WTC11 (cell line): ENCODE measurements at regions of chr3 and their contacts with region 1.

Region 1: DNA sequence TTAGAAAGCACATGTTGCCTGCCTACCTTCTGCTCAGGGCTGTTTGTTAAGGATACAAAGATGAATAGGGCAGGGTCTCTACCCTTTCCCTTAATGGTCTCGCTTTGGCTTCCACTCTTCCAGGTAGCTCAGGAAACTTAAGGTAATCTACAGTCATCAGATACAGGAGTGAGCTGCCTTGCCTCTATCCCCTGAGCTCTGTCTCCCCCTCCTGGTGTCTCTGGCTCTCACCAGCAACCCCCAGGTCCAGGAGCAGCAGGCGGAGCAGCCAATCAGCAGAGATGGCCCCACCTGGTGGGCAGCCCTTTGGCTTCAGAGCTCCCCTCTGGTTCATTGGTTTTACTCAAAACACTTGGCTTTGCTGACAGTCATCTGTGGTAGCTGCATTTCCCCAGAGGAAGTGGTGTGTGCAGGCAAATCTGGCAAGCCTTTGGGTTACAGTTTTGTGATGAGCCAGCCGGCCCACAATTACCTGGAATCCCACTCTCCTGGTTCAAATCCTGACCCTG is 8.5 kb upstream of the CX3CR1 start:
- DNase-seq: peak; percentile 94
- ATAC-seq: peak; percentile 98
- H3K4me3 Mint-ChIP-seq: no peak overlapping the region
- H3K27ac Mint-ChIP-seq: no peak overlapping the region
- H3K4me1 Mint-ChIP-seq: peaks cover 5% of the 10 kb centered on the region
- H3K27me3 Mint-ChIP-seq: no peaks in the 10 kb centered on the region
- CTCF ChIP-seq: peak; percentile 47; the same call in 1 of the 2 replicates

Region 2: DNA sequence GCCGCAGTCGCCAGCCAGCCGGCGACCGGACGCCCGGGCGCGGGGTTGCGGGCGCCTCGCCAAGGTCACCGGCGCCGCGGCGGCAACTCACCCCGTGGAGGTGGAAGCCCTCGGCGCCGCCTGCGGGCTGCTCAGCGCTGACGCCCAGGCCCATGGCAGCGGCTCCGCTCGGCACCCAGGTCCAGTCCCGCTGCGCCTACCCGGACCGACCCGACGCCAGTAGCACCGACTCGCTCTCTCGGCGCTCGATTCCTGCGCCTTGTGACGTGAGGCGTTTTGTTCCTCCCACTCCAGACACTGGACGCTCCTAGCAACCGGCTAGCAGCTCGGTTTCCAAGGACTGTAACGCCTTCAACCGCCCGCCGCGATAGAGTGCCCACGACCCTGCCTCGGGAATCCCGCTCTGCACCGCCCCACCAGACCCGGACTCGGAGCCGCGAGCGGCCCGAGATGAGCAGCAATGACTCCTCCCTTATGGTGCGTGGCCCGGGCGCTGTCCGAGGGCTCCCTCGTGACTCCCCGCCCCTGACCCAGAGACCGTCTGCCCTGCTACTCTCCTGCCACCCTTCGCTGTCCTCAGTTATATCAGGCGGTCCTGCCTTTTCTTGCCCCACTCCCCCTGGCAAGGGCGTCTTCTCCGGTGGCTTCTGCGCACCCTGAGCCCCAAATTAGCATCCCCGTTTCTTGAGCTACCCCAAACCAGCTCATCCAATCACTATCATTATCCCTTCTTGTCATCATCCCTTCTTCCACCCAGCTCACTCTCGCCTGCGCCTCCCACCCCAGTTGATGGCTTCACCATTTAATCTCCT is 180.8 kb before region 1 on chr3 and contains the starts of genes GORASP1 and TTC21A:
- CTCF ChIA-PET with region 1: interaction called, 44 read pairs
- POLR2A ChIA-PET with region 1: interaction called, 3 read pairs
- DNase-seq: peak; percentile 83
- ATAC-seq: peak; percentile 65
- H3K4me3 Mint-ChIP-seq: peak within 1 kb of the TSS; percentile 99
- H3K27ac Mint-ChIP-seq: no peak within 1 kb of the TSS; the same call in none of the 2 replicates
- H3K4me1 Mint-ChIP-seq: peaks cover 23% of the 10 kb centered on the region
- H3K27me3 Mint-ChIP-seq: peaks cover 16% of the 10 kb centered on the region
- CTCF ChIP-seq: no peak
- total RNA-seq, gene GORASP1: 44.6 to 50.7 TPM (median 47.4 TPM) in 3 replicates
- total RNA-seq, gene TTC21A: 3.8 to 4.6 TPM (median 4.4 TPM) in 3 replicates

Region 3: GRCh38 chr3:39158148-39158715 is 130.1 kb before region 1 on chr3:
- CTCF ChIA-PET with region 1: interaction called, 10 read pairs
- POLR2A ChIA-PET with region 1: interaction called, 5 read pairs
- DNase-seq: no peak
- ATAC-seq: no peak
- H3K4me3 Mint-ChIP-seq: no peak overlapping the region
- H3K27ac Mint-ChIP-seq: no peak overlapping the region
- H3K4me1 Mint-ChIP-seq: peaks cover 37% of the 10 kb centered on the region
- H3K27me3 Mint-ChIP-seq: peaks cover 1% of the 10 kb centered on the region; the same call in 1 of the 2 replicates
- CTCF ChIP-seq: no peak

Region 4: GRCh38 chr3:39202094-39202493 is 86.3 kb before region 1 on chr3:
- CTCF ChIA-PET with region 1: interaction called, 291 read pairs
- POLR2A ChIA-PET with region 1: no interaction called
- DNase-seq: no peak
- ATAC-seq: no peak
- H3K4me3 Mint-ChIP-seq: no peak overlapping the region
- H3K27ac Mint-ChIP-seq: no peak overlapping the region
- H3K4me1 Mint-ChIP-seq: peaks cover 3% of the 10 kb centered on the region
- H3K27me3 Mint-ChIP-seq: no peaks in the 10 kb centered on the region
- CTCF ChIP-seq: no peak

Region 5: DNA sequence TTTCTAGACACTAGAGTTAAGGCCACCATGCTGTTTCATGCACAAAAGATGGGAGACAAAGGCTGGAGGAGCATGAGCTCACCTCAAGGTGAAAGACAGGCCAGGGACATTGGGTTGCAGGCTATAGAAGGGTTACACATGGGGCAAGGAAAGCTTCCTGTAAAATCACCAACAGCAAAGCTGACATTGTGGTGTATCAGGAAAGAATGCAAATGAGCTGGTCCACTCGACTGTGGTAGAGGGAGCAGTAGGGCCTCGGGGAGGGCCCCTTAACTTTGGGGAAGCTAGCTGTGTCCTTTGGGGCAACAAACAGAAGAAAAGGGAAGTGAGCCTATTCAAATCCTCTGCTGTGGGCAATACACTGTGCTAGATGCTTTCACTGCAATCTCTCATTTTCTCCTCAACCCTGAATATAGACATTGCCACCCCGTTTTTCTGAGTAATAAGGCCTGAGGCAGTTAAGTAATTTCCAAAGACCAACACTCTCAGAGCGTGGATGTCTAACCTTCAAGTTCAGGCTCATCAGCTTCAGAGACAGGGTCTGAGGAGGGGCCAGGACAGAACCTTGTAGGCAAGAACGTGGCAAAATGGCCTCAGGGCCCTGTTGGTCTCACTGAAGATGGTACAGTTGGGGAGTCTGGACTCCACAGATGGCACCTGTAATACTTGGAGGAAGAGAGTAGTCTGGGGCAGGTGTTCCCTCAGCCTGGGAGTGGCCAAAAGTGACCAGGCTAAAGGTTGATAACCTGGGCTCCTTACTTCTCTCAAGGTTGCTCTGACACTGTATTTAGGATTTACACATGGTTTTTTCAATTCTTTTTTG is 32.6 kb before region 1 on chr3:
- CTCF ChIA-PET with region 1: interaction called, 10 read pairs
- POLR2A ChIA-PET with region 1: no interaction called
- DNase-seq: no peak
- ATAC-seq: no peak
- H3K4me3 Mint-ChIP-seq: no peak overlapping the region
- H3K27ac Mint-ChIP-seq: no peak overlapping the region
- H3K4me1 Mint-ChIP-seq: no peaks in the 10 kb centered on the region
- H3K27me3 Mint-ChIP-seq: no peaks in the 10 kb centered on the region
- CTCF ChIP-seq: no peak

Region 6: DNA sequence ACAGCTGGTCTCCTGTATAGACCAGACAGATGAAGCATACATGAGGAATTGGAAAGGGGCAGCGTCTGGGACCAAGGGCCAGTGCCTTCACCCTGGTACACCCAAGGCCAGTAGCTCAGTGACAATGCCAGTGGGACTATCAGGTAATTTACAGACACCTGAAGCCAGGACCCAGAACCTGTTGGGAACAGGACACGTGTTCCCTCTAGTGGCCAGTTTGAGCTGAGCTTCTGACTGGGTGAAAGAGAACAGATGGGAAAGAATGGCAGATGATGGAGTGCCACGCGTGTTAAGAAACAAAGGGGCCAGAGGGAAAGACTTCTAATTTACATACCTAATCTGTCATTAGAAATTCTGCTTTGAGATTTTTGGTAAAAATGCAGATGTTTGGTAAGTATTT is 89.7 kb after region 1 on chr3:
- CTCF ChIA-PET with region 1: interaction called, 204 read pairs
- POLR2A ChIA-PET with region 1: interaction called, 5 read pairs
- DNase-seq: peak; percentile 71
- ATAC-seq: peak; percentile 89
- H3K4me3 Mint-ChIP-seq: no peak overlapping the region
- H3K27ac Mint-ChIP-seq: peak overlapping the region; percentile 46; the same call in 1 of the 2 replicates
- H3K4me1 Mint-ChIP-seq: peaks cover 33% of the 10 kb centered on the region
- H3K27me3 Mint-ChIP-seq: no peaks in the 10 kb centered on the region
- CTCF ChIP-seq: peak; percentile 42